ENCODE measurements at regions of chr2 and their contacts with region 1.

Region 1: GRCh38 chr2:117771969-117772630 is 42.4 kb upstream of the DDX18 start:
- DNase-seq: peak; percentile 64
- ATAC-seq: peak; percentile 55; the same call in 1 of the 2 replicates
- H3K4me3 ChIP-seq: no peak overlapping the region
- H3K27ac ChIP-seq: no peak overlapping the region
- H3K4me1 ChIP-seq: no peaks in the 10 kb centered on the region
- H3K27me3 ChIP-seq: peaks cover 11% of the 10 kb centered on the region; the same call in 1 of the 2 replicates
- CTCF ChIP-seq: peak; percentile 68

Region 2: GRCh38 chr2:115910276-115910675 is 1861.8 kb before region 1 on chr2:
- CTCF ChIA-PET with region 1: no interaction called
- POLR2A ChIA-PET with region 1: no interaction called
- intact Hi-C with region 1: loop called (anchors 10 kb)
- DNase-seq: peak; percentile 26
- ATAC-seq: no peak
- H3K4me3 ChIP-seq: no peak overlapping the region
- H3K27ac ChIP-seq: no peak overlapping the region
- H3K4me1 ChIP-seq: no peaks in the 10 kb centered on the region
- H3K27me3 ChIP-seq: no peaks in the 10 kb centered on the region
- CTCF ChIP-seq: peak; percentile 51; the same call in 1 of the 2 replicates

Region 3: DNA sequence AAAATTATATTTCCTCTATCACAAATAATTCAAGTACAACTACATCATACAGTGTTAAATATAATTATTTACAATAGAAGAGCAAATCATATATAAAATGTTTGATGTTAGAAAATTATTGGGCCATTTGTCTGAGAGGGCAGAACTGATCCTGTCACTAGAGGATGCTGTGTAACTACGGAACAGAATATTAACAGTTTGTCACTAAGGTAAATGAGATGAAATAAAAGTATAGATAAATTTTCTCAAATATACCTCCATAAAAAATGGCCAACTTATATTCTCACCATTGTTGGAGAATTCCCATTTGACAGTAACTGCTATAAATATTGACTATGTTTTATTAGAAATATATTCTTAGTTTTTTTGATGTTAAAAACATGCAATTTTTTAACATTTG is 1025.0 kb before region 1 on chr2:
- CTCF ChIA-PET with region 1: no interaction called
- POLR2A ChIA-PET with region 1: no interaction called
- intact Hi-C with region 1: loop called (anchors 2 kb)
- DNase-seq: peak; percentile 43
- ATAC-seq: no peak
- H3K4me3 ChIP-seq: no peak overlapping the region
- H3K27ac ChIP-seq: no peak overlapping the region
- H3K4me1 ChIP-seq: no peaks in the 10 kb centered on the region
- H3K27me3 ChIP-seq: 0 out of 2 replicates have a peak, but pooled peaks cover 3% of the 10 kb centered on the region
- CTCF ChIP-seq: peak; percentile 72

Region 4: GRCh38 chr2:117470311-117471095 is 301.6 kb before region 1 on chr2:
- CTCF ChIA-PET with region 1: no interaction called
- POLR2A ChIA-PET with region 1: no interaction called
- intact Hi-C with region 1: loop called (anchors 2 kb)
- DNase-seq: peak; percentile 43
- ATAC-seq: no peak
- H3K4me3 ChIP-seq: no peak overlapping the region
- H3K27ac ChIP-seq: no peak overlapping the region
- H3K4me1 ChIP-seq: no peaks in the 10 kb centered on the region
- H3K27me3 ChIP-seq: no peaks in the 10 kb centered on the region
- CTCF ChIP-seq: peak; percentile 77

Region 5: DNA sequence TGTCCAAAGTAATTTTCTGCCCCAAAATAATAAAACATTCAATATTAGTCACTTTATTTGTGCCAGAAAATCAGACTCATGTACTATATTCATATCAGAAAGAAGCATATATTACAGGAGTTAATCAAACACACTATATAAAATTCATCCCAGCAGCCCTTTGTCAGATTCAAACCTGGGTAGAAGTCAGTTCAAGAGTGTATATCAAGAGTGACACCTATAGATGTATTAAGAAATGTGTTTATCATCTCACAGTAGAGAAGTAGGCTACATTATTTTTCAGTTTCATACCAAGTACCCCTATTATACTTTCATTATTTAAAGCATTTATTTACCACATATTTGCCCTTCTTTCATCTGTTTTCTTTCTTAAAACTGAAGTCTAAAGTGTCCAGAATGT is 150.8 kb before region 1 on chr2:
- CTCF ChIA-PET with region 1: no interaction called
- POLR2A ChIA-PET with region 1: no interaction called
- intact Hi-C with region 1: no loop called
- DNase-seq: no peak
- ATAC-seq: peak; percentile 31; the same call in 1 of the 2 replicates
- H3K4me3 ChIP-seq: no peak overlapping the region
- H3K27ac ChIP-seq: no peak overlapping the region
- H3K4me1 ChIP-seq: no peaks in the 10 kb centered on the region
- H3K27me3 ChIP-seq: no peaks in the 10 kb centered on the region
- CTCF ChIP-seq: no peak

Region 6: DNA sequence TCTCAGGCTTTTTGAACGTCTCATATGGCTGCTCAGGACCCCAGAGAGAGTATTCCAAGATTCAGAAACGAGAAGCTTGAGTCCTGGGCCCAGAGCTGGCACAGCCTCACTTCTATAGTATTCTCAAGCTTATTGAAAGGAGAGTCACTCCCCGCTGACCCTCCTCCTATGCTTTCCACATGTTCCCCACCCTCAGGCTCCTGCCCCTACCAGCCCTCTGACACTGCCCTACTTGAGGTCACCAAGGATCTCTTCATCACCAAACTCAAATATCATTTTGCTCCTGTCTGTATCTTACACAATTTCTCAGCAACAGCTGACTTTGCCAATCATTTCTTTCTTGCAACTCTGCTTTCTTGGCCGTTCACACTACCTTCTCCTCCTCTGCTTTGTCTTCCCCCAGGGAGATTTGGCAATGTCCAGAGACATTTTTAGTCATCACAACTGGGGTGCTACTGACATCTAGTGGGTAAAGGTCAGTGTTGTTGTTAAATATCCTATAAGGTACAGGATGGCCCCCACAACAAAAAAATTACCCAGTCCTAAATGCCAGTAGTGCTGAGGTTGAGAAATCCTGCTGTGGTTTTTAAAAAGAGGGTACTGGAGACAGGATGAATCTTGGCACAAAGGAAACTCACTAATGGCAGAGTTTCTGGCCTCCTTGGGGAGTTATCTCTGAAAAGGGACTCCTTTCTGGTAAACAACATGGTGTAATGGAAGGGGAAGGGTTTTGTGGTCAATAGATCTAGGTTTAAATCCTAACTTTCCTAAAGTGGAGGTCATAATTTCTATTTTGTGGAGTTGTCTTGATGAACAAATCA is 289.2 kb after region 1 on chr2:
- CTCF ChIA-PET with region 1: no interaction called
- POLR2A ChIA-PET with region 1: no interaction called
- intact Hi-C with region 1: no loop called
- DNase-seq: peak; percentile 78
- ATAC-seq: peak; percentile 76
- H3K4me3 ChIP-seq: no peak overlapping the region
- H3K27ac ChIP-seq: no peak overlapping the region
- H3K4me1 ChIP-seq: peaks cover 18% of the 10 kb centered on the region; the same call in 1 of the 2 replicates
- H3K27me3 ChIP-seq: no peaks in the 10 kb centered on the region
- CTCF ChIP-seq: peak; percentile 73

Measured in PC-3 (cell line).